Ovary (tissue), 10 donors: ENCODE measurements at regions of chr3 and their contacts with region 1.

Region 1: GRCh38 chr3:161274719-161275298 is 53.7 kb downstream of the NMD3 start:
- DNase-seq: no peak
- H3K4me3 ChIP-seq: no peak overlapping the region
- H3K27ac ChIP-seq: no peak overlapping the region
- H3K4me1 ChIP-seq: no peaks in the 10 kb centered on the region
- H3K27me3 ChIP-seq: no peaks in the 10 kb centered on the region
- CTCF ChIP-seq: no peak
- EP300 ChIP-seq: no peak
- POLR2A ChIP-seq: no peak

Region 2: DNA sequence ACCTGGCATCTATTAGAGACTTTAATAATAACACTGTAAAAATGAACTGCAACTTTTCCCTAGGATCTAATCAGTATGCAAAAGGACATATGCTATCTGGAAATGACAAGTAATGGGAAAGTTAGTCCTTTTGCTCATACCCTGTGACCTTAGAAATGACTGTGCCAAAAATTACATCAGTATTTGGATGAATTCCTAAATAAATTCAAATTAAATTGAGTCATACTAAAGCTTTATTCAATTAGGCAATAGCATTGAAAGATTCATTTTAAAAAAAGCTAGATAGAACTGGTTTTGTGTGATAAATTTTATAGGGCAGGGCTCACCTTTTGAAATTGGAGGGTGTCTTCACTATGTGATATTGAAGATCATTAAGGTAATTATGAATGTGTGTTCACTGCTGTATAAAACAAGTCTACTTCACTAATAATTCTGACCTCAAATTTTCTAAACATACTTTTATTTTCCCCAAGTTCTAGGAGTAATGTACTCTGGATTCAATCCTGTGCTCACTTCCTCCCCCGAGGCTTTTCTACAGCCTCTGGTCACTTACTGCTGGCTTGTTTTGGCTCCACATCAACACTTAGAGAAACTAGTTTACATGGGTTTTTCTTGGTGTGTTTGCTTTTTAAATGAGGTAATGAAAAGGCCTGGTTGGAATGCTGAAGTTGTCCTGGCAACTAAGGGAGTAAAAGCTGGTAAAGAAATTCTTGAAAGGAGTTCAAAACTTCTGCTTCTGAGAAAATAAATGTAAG is 140.9 kb after region 1 on chr3:
- intact Hi-C with region 1: loop called in 1 of 4 experiments (anchors 5 kb)
- DNase-seq: no peak
- H3K4me3 ChIP-seq: no peak overlapping the region
- H3K27ac ChIP-seq: no peak overlapping the region
- H3K4me1 ChIP-seq: no peaks in the 10 kb centered on the region
- H3K27me3 ChIP-seq: no peaks in the 10 kb centered on the region
- CTCF ChIP-seq: no peak
- EP300 ChIP-seq: no peak
- POLR2A ChIP-seq: no peak